Right ventricle myocardium superior (tissue), 1 donor: ENCODE measurements at regions of chr3 and their contacts with region 1.

Region 1: GRCh38 chr3:44198284-44199269 is 43.1 kb upstream of the TOPAZ1 start:
- DNase-seq: peak; percentile 46
- ATAC-seq: peak; percentile 79

Region 2: GRCh38 chr3:43540624-43541023 is 658.0 kb before region 1 on chr3:
- intact Hi-C with region 1: loop called (anchors 2 kb)
- DNase-seq: no peak
- ATAC-seq: no peak

Region 3: DNA sequence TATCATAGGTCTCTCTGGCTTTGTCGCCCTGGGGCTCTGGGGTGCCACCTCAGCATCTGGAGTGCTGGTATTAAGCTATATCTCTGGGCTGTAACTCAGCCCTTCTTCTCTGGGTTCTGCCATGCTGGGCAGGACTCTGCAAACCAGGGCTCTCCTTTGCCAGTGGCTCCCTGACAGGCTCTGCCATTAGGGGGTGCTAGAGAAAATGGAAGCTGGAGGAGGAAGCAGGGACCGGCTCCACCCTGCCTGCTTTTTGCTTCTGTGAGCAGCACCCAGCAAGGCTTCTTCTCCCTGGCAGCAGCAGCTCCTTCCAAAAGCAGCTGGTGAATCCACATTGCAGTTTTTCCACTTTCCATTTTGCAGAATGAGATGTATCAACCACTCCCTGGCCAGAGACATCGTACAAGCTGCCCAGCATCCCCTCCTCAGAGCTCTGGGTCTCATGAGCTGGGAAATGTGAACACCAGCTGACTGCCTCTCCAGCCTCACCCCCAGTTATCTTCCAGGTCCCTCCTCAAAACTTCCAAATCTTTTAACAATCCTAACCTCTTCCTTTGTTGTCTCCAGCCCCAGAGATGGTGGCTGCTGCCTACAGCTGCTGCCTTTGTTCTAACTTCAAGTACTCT is 342.8 kb before region 1 on chr3:
- intact Hi-C with region 1: loop called (anchors 5 kb)
- DNase-seq: peak; percentile 54
- ATAC-seq: peak; percentile 89

Region 4: GRCh38 chr3:44099566-44100297 is 98.8 kb before region 1 on chr3:
- intact Hi-C with region 1: no loop called
- DNase-seq: no peak
- ATAC-seq: no peak